Naive thymus-derived CD4-positive, alpha-beta T cell (primary cell): ENCODE measurements at regions of chr7 and their contacts with region 1.

Region 1: DNA sequence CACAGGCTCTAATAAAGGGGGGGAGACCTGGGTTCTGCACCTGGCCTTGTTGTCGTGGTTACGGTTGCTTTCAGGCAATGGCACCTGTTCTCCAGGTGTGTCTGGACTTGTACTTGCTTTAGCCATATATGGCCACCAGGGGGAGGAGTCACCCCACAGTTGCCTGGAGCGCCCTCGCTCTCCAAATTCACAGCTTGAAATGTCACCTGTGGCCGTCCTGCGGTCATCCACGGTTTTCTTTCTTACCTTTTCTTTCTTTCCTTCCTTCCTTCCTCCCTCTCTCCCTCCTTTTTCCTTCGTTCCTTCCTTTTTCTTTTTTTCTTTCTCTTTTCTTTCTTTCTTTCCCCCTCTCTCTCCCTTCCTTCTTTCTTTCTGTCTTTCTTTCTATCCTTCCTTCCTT is 157.2 kb upstream of the ZNF92 start:
- DNase-seq: peak; percentile 18 to 72 (median 46)
- ATAC-seq: peak; percentile 80
- H3K4me3 ChIP-seq: no peak overlapping the region
- H3K4me3 Mint-ChIP-seq: peak overlapping the region in 2 of 10 donors; percentile 43 to 58
- H3K27ac ChIP-seq: no peak overlapping the region
- H3K27ac Mint-ChIP-seq: no peak overlapping the region
- H3K4me1 ChIP-seq: no peaks in the 10 kb centered on the region
- H3K4me1 Mint-ChIP-seq: peaks cover 0 to 3% (median 0%) of the 10 kb centered on the region in 7 donors
- H3K27me3 ChIP-seq: no peaks in the 10 kb centered on the region
- H3K27me3 Mint-ChIP-seq: peaks cover 0 to 3% (median 0%) of the 10 kb centered on the region in 5 donors

Region 2: DNA sequence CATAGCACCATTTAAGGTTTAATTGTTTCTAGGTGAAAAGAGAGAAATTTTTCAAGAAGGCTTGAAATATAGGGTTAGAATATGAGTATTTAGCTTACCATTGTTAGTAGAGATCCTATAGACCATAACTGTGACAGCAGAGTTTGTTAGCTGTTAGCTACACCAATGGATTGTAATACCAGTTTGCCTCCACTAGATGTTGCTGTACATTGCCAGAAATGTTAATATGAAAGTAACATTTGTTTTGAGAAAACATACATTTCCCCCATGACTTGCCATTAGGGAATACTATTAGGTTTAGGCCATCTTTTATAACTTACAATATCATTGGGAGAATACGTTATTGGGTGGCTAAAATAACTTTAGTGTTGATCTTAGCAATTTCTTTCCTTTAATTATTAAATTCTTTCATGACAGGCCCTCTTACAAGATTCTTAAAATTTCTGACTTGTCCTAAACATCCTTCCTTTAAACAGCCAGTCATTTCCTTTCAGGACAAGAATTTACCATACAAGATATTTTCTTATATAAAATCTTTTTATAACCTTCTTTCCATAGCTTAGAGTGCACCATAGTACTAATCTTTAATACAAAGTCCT is 265.1 kb before region 1 on chr7:
- CTCF ChIA-PET with region 1: interaction called, 4 read pairs
- POLR2A ChIA-PET with region 1: no interaction called
- intact Hi-C with region 1: loop called in 1 of 2 experiments (anchors 1 kb)
- DNase-seq: peak in 7 of 9 donors; percentile 15 to 60 (median 46)
- ATAC-seq: peak; percentile 74
- H3K4me3 ChIP-seq: no peak overlapping the region
- H3K4me3 Mint-ChIP-seq: no peak overlapping the region
- H3K27ac ChIP-seq: no peak overlapping the region
- H3K27ac Mint-ChIP-seq: no peak overlapping the region
- H3K4me1 ChIP-seq: no peaks in the 10 kb centered on the region
- H3K4me1 Mint-ChIP-seq: peaks cover 0 to 5% (median 4%) of the 10 kb centered on the region in 7 donors
- H3K27me3 ChIP-seq: no peaks in the 10 kb centered on the region
- H3K27me3 Mint-ChIP-seq: peaks cover 25 to 43% (median 39%) of the 10 kb centered on the region in 5 donors